Dorsolateral prefrontal cortex (tissue), 120 donors: ENCODE measurements at regions of chr7 and their contacts with region 1.

Region 1: GRCh38 chr7:23679898-23680413 is at the start of gene FAM221A:
- DNase-seq: peak; percentile 83 to 94 (median 90)
- H3K4me3 ChIP-seq: peak within 1 kb of the TSS; percentile 65 to 99 (median 92)
- H3K27ac ChIP-seq: peak within 1 kb of the TSS; percentile 68 to 100 (median 93)
- H3K27me3 ChIP-seq: no peaks in the 10 kb centered on the region
- CTCF ChIP-seq: peak; percentile 25 to 85 (median 72)
- total RNA-seq, gene FAM221A: 10.1 to 49.8 (median 22.1) TPM

Region 2: DNA sequence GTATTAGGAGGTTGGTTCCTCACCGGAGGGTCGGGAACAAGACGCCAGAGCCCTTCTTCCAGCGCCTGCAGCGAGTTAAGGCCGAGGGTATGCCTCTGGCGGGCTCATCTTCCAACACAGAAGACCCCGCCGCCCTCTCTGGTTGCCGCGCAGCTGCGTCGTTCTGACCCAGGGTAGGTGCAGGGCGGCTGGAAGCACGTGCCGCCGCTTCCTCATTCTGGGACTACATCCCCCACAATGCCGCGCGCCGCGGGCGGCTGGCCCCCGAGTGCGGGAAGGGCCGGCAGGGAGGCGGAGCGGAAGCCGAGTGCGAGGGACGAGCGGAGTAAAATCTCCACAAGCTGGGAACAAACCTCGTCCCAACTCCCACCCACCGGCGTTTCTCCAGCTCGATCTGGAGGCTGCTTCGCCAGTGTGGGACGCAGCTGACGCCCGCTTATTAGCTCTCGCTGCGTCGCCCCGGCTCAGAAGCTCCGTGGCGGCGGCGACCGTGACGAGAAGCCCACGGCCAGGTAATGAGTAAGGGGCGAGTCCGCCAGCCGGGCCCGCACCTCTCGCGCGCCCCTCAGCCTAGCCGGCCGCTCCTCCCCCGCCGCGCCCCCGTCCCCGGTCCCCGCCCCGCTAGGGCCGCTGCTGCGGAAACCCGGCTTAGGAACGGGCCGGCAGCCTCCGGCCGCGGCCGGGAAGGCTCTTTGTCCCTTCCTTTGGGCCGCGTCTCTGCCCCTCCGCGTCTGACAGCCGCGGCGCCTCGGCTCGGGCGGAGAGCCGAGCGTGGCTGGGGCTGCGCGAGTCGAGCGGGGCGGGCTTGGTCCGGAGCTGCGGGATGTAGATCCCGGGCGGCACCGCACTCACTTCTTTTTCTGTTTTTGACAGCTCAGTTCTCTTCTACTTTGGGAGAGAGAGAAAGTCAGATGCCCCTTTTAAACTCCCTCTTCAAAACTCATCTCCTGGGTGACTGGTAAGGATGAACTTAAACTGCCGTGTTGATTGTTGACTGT is 82.6 kb before region 1 on chr7 and contains the start of gene CCDC126:
- intact Hi-C with region 1: loop called (anchors 1 to 2 kb)
- DNase-seq: peak; percentile 83 to 96 (median 92)
- H3K4me3 ChIP-seq: peak within 1 kb of the TSS; percentile 57 to 97 (median 86)
- H3K27ac ChIP-seq: peak within 1 kb of the TSS; percentile 74 to 99 (median 94)
- H3K27me3 ChIP-seq: no peaks in the 10 kb centered on the region
- CTCF ChIP-seq: peak in 32 of 56 donors; percentile 9 to 56 (median 30)
- total RNA-seq, gene CCDC126: 11.7 to 28.0 (median 16.8) TPM

Region 3: GRCh38 chr7:24102988-24103387 is 423.0 kb after region 1 on chr7:
- intact Hi-C with region 1: no loop called
- DNase-seq: no peak
- H3K4me3 ChIP-seq: no peak overlapping the region
- H3K27ac ChIP-seq: no peak overlapping the region
- H3K27me3 ChIP-seq: no peaks in the 10 kb centered on the region
- CTCF ChIP-seq: no peak